Endothelial cell of umbilical vein (primary cell): ENCODE measurements at regions of chr2 and their contacts with region 1.

Region 1: GRCh38 chr2:224173933-224174332 is 134.8 kb upstream of the SERPINE2 start:
- DNase-seq: no peak
- H3K4me3 ChIP-seq: no peak overlapping the region
- H3K27ac ChIP-seq: no peak overlapping the region
- H3K4me1 ChIP-seq: peaks cover 31% of the 10 kb centered on the region
- H3K27me3 ChIP-seq: peaks cover 0 to 2% of the 10 kb centered on the region in 2 experiments
- CTCF ChIP-seq: no peak
- POLR2A ChIP-seq: no peak

Region 2: DNA sequence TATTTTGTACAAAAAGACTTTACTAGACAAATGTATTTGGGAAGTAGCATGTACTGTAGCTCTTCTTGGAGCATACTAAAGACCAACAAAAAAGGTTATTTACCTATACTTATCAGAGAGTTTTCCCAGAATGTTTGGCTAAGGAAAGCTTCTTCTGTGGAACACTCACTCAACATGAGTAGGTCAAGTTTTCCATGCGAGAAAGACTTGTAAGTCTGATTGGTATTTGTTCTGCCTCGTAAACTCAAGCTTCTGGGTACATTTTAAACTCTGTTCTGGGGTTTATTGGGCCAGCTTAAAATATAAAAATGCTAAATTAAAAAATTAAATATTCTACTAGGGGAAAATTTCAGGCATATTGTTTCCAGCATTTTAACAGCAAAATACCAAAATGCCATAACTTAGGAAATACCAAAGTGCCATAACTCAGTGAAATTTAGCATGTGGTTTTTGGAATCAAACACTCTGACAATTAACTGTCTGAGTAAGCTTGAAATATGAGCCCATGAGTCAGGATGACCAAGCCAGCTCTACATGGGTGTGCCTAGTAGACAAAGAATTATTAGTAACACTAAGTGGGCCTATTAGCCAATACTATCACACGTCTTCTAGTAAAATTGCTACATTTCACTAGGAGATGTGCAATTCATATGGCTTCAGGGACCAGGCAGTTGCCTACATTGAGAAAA is 87.6 kb before region 1 on chr2:
- CTCF ChIA-PET with region 1: no interaction called
- POLR2A ChIA-PET with region 1: no interaction called
- dilution Hi-C with region 1: no loop called
- intact Hi-C with region 1: no loop called
- DNase-seq: peak; percentile 17
- H3K4me3 ChIP-seq: no peak overlapping the region
- H3K27ac ChIP-seq: no peak overlapping the region
- H3K4me1 ChIP-seq: peaks cover 3% of the 10 kb centered on the region
- H3K27me3 ChIP-seq: no peaks in the 10 kb centered on the region
- CTCF ChIP-seq: no peak
- POLR2A ChIP-seq: no peak

Region 3: DNA sequence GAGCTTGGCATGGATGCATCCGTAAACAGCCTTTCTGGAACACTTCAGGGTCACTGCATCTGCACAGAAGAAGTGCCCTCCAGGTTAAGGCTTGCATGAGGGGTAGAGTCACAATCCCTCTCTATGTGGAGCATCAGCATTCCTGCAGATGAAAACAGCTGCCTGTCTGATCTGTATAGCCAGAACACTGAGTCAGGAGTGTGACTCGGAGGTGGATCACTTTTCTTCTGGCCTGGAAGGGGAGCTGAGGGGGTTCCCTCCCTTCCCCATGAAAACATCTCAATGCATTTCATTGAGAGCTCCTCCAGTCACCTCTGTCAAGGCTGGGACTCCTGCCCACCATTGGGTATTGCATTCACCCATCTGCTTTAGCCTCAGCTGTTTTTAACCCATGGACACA is 62.4 kb before region 1 on chr2:
- CTCF ChIA-PET with region 1: no interaction called
- POLR2A ChIA-PET with region 1: no interaction called
- dilution Hi-C with region 1: no loop called
- intact Hi-C with region 1: no loop called
- DNase-seq: no peak
- H3K4me3 ChIP-seq: no peak overlapping the region
- H3K27ac ChIP-seq: no peak overlapping the region
- H3K4me1 ChIP-seq: no peaks in the 10 kb centered on the region
- H3K27me3 ChIP-seq: peaks cover 0 to 2% of the 10 kb centered on the region in 2 experiments
- CTCF ChIP-seq: no peak
- POLR2A ChIP-seq: no peak

Region 4: GRCh38 chr2:224221455-224221913 is 47.6 kb after region 1 on chr2:
- CTCF ChIA-PET with region 1: no interaction called
- POLR2A ChIA-PET with region 1: no interaction called
- dilution Hi-C with region 1: no loop called
- intact Hi-C with region 1: loop called (anchors 1 kb)
- DNase-seq: peak; percentile 88
- H3K4me3 ChIP-seq: no peak overlapping the region
- H3K27ac ChIP-seq: peak overlapping the region; percentile 99
- H3K4me1 ChIP-seq: peaks cover 26% of the 10 kb centered on the region
- H3K27me3 ChIP-seq: no peaks in the 10 kb centered on the region
- CTCF ChIP-seq: no peak
- POLR2A ChIP-seq: no peak